Mammary epithelial cell (primary cell): ENCODE measurements at regions of chr7 and their contacts with region 1.

Region 1: GRCh38 chr7:126529833-126530232 is 722.9 kb downstream of the GRM8 start:
- DNase-seq: peak; percentile 29
- H3K4me3 ChIP-seq: no peak overlapping the region
- H3K27ac ChIP-seq: no peak overlapping the region
- H3K4me1 ChIP-seq: peaks cover 5% of the 10 kb centered on the region
- H3K27me3 ChIP-seq: no peaks in the 10 kb centered on the region
- CTCF ChIP-seq: no peak

Region 2: GRCh38 chr7:126605056-126605455 is 75.2 kb after region 1 on chr7:
- CTCF ChIA-PET with region 1: no interaction called
- dilution Hi-C with region 1: no loop called
- in situ Hi-C with region 1: no loop called
- intact Hi-C with region 1: loop called (anchors 10 kb)
- DNase-seq: no peak
- H3K4me3 ChIP-seq: no peak overlapping the region
- H3K27ac ChIP-seq: no peak overlapping the region
- H3K4me1 ChIP-seq: no peaks in the 10 kb centered on the region
- H3K27me3 ChIP-seq: no peaks in the 10 kb centered on the region
- CTCF ChIP-seq: no peak